Heart right ventricle (tissue), 16 donors: ENCODE measurements at regions of chr10 and their contacts with region 1.

Region 1: DNA sequence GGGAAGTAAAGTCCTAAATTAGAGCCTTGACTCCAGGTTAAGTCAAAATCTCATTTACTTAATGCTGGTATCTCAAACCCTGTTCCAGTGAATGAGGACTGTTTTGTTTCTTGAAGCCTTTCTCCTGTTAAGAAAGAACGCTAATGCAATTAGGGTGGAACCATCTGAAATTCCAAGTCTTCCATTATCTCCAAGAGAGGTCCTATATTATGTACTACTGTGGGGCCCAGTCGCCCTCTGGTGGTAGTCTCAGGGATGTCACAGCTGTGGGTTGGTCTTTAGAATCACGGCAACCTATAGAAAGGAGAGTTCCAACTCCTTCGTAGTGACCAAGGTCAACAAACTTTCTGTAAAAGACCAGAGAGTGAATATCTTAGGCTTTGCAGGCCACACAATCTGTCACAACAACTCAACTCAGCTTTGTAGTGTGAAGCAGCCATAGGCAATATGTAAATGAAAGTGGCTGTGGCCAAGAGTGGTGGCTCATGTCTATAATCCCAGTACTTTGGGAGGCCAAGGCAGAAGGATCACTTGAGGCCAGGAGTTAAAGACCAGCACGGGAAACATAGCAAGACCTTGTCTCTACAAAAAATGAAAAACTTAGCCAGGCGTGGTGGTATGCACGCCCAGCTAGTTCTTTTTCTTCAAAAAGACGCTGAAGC is 9.3 kb downstream of the RPP38 start:
- DNase-seq: peak; percentile 54 to 64
- ATAC-seq: peak; percentile 51 to 95 (median 83)
- H3K4me3 ChIP-seq: no peak overlapping the region
- H3K27ac ChIP-seq: no peak overlapping the region
- H3K4me1 ChIP-seq: peaks cover 0 to 7% (median 0%) of the 10 kb centered on the region in 9 donors
- H3K27me3 ChIP-seq: no peaks in the 10 kb centered on the region
- CTCF ChIP-seq: peak; percentile 64 to 92 (median 86)

Region 2: DNA sequence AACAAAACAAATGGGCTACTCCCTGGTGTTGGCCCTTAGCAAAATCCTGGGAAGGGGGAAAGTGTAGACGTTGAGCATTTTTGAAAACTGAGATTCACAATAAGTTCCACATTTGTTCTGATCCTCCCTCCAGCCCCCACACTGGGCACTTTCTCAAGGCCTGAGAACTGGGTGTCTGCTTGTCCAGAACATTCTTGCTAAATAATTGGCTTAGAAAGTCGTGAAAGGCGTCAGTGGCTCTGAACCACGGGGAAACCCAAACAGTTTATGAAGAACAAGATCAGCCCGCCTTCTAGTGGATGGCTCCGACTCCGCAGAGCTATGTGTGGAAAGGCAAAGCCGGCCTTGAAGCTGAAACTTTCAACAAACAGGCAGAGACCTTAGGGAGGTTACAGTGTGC is 1149.7 kb before region 1 on chr10:
- intact Hi-C with region 1: no loop called
- DNase-seq: peak; percentile 35 to 59
- ATAC-seq: peak; percentile 60 to 89 (median 84)
- H3K4me3 ChIP-seq: no peak overlapping the region
- H3K27ac ChIP-seq: peak overlapping the region in 7 of 10 donors; percentile 9 to 65 (median 41)
- H3K4me1 ChIP-seq: peaks cover 0 to 31% (median 13%) of the 10 kb centered on the region in 9 donors
- H3K27me3 ChIP-seq: no peaks in the 10 kb centered on the region
- CTCF ChIP-seq: peak in 7 of 9 donors; percentile 31 to 60 (median 36)

Region 3: DNA sequence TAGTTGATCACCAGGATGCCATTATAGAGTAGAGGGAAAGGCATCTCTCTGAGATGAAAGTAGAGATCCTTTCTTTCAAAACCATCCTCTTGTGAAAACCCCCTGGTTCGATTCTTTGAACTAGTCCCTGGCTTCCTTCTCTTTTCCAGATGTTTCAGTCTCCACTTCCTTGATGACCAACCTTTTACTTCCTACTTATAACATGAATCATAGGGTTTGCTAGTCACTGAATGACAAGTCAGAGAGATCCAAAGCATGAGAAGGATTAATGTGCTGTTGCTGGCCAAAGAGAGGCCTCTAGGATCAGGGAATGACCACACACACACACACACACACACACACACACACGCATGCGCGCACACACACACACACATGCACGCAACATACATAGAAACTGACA is 614.7 kb before region 1 on chr10:
- intact Hi-C with region 1: loop called in 1 of 10 experiments (anchors 10 kb)
- DNase-seq: no peak
- ATAC-seq: no peak
- H3K4me3 ChIP-seq: no peak overlapping the region
- H3K27ac ChIP-seq: no peak overlapping the region
- H3K4me1 ChIP-seq: no peaks in the 10 kb centered on the region
- H3K27me3 ChIP-seq: peaks cover 0 to 25% (median 6%) of the 10 kb centered on the region in 7 donors
- CTCF ChIP-seq: no peak

Region 4: GRCh38 chr10:14500172-14500765 is 606.2 kb before region 1 on chr10:
- intact Hi-C with region 1: loop called in 3 of 10 experiments (anchors 5 to 10 kb)
- DNase-seq: no peak
- ATAC-seq: no peak
- H3K4me3 ChIP-seq: no peak overlapping the region
- H3K27ac ChIP-seq: no peak overlapping the region
- H3K4me1 ChIP-seq: peaks cover 0 to 9% (median 0%) of the 10 kb centered on the region in 9 donors
- H3K27me3 ChIP-seq: peaks cover 0 to 3% (median 0%) of the 10 kb centered on the region in 7 donors
- CTCF ChIP-seq: no peak

Region 5: DNA sequence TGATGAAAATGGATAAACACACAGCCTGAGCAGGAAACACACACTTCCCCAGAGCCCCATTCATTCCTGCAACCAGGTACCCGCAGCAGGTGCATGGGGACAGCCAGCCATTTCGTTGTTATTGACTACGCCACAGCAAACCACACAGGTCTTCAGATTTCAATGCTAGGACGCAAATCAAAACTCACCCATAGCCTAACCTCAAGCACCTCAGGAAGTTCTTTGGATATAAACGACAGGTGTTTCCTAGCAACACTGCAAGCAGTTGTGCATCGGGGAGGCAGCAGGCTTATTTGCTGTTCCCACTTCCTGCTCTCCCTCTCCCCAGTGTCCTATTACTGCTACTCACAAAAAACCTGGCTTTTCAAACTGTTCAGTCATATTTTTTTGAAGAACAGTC is 599.3 kb before region 1 on chr10:
- intact Hi-C with region 1: loop called in 2 of 10 experiments (anchors 5 to 10 kb)
- DNase-seq: no peak
- ATAC-seq: no peak
- H3K4me3 ChIP-seq: no peak overlapping the region
- H3K27ac ChIP-seq: no peak overlapping the region
- H3K4me1 ChIP-seq: no peaks in the 10 kb centered on the region
- H3K27me3 ChIP-seq: no peaks in the 10 kb centered on the region
- CTCF ChIP-seq: no peak

Region 6: GRCh38 chr10:14536241-14537213 is 570.0 kb before region 1 on chr10:
- intact Hi-C with region 1: loop called in 2 of 10 experiments (anchors 5 to 10 kb)
- DNase-seq: peak; percentile 69 to 82
- ATAC-seq: peak; percentile 72 to 91 (median 88)
- H3K4me3 ChIP-seq: no peak overlapping the region
- H3K27ac ChIP-seq: peak overlapping the region in 2 of 10 donors; percentile 41 to 50
- H3K4me1 ChIP-seq: peaks cover 0 to 21% (median 7%) of the 10 kb centered on the region in 9 donors
- H3K27me3 ChIP-seq: no peaks in the 10 kb centered on the region
- CTCF ChIP-seq: peak; percentile 31 to 78 (median 70)

Region 7: DNA sequence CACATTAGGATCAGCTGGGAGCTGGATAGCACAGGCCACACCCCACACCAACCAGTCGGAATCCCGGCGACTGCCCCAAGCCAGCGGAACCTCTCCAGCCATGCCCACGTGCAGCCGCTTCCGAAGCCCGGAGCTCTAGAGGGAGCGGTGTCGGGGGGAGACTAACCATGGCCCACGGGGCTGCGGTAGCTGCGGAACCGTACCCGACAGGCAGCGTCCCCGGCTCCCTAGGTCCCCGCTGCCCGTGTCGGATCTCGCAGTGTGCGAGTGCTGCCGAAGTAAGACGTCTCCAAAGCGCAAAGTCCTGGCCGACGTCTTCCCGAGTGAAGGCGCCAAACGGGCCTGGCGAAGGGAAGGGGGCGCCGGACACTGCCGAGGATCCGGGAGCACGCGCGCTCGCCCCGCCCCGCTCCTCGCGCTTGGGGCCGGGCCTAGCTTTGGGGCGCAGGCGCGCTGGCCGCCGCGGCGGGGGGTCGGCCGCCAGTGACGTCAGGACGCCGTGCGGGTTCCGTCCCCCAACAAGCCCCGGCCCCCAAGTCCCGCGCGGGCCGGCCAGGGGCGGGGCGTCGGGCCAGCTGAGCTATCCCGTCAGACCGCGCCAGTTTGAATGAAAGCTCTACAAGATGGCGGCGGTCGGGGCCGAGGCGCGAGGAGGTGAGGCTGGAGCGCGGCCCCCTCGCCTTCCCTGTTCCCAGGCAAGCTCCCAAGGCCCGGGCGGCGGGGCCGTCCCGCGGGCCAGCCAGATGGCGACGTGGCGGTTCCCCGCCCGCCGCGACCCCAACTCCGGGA is 228.0 kb before region 1 on chr10 and contains the start of gene SUV39H2:
- intact Hi-C with region 1: loop called in 1 of 10 experiments (anchors 10 kb)
- DNase-seq: peak; percentile 94 to 97
- ATAC-seq: peak; percentile 94 to 99 (median 96)
- H3K4me3 ChIP-seq: peak within 1 kb of the TSS; percentile 68 to 96 (median 85)
- H3K27ac ChIP-seq: peak within 1 kb of the TSS; percentile 82 to 99 (median 96)
- H3K4me1 ChIP-seq: peaks cover 0 to 45% (median 30%) of the 10 kb centered on the region in 9 donors
- H3K27me3 ChIP-seq: no peaks in the 10 kb centered on the region
- CTCF ChIP-seq: peak in 3 of 9 donors; percentile 20 to 40 (median 37)
- total RNA-seq, gene SUV39H2: 4.3 to 9.1 (median 7.4) TPM

Region 8: GRCh38 chr10:15083674-15084501 is 22.6 kb before region 1 on chr10:
- intact Hi-C with region 1: no loop called
- DNase-seq: no peak
- ATAC-seq: peak in 4 of 8 donors; percentile 13 to 22 (median 19)
- H3K4me3 ChIP-seq: peak overlapping the region; percentile 22 to 59 (median 49)
- H3K27ac ChIP-seq: peak overlapping the region in 8 of 10 donors; percentile 5 to 71 (median 57)
- H3K4me1 ChIP-seq: peaks cover 0 to 18% (median 14%) of the 10 kb centered on the region in 9 donors
- H3K27me3 ChIP-seq: peaks cover 0 to 7% (median 0%) of the 10 kb centered on the region in 7 donors
- CTCF ChIP-seq: no peak

Region 9: GRCh38 chr10:15168781-15169554 is 62.5 kb after region 1 on chr10:
- intact Hi-C with region 1: loop called in 1 of 10 experiments (anchors 10 kb)
- DNase-seq: peak; percentile 97 to 98
- ATAC-seq: peak; percentile 87 to 94 (median 93)
- H3K4me3 ChIP-seq: peak overlapping the region in 6 of 10 donors; percentile 22 to 46 (median 35)
- H3K27ac ChIP-seq: peak overlapping the region in 9 of 10 donors; percentile 14 to 82 (median 65)
- H3K4me1 ChIP-seq: peaks cover 7 to 40% (median 34%) of the 10 kb centered on the region in 9 donors
- H3K27me3 ChIP-seq: peaks cover 0 to 15% (median 0%) of the 10 kb centered on the region in 7 donors
- CTCF ChIP-seq: no peak